ENCODE measurements at regions of chr17 and their contacts with region 1.

Region 1: DNA sequence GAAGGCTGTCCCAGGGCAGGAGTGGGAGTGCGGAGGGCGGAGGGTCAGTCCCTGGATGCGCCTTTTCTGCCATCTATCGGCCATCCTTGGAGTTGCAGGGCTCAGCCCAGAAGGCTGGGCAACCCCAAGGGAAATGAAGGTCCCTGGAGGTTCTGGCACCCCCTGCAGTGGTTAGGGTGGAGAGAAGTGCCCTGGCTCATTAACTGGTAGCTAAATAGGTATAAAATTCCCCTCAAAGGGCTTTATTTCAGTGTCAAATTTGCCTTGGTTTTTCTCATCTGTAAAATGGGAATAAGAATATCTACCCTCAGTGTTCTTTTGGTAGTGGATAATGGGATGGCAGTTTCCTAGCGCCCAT is 22.4 kb downstream of the C17orf75 start:
- DNase-seq: peak; percentile 41 to 45
- ATAC-seq: peak; percentile 71 to 85
- H3K4me3 ChIP-seq: no peak overlapping the region
- H3K27ac ChIP-seq: no peak overlapping the region
- H3K4me1 ChIP-seq: no peaks in the 10 kb centered on the region
- H3K27me3 ChIP-seq: no peaks in the 10 kb centered on the region
- CTCF ChIP-seq: peak; percentile 77 to 93 (median 80)
- POLR2A ChIP-seq: no peak

Region 2: DNA sequence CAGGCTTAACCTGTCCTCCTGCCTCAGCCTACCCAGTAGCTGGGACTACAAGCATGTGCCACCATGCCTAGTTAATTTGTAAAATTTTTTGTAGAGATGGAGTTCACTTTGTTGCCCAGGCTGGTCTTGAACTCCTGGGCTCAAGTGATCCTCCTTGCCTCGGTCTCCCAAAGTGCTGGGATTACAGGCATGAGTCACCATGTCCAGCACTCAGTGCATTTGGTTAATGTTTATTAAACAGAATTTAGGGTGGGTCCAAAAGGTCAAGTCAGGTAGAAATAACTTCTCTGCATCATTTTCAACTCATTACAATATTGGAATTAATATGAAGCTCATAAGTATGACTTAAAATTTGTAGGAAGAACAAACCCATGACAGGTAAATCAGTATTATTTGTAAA is 121.5 kb before region 1 on chr17:
- in situ Hi-C with region 1: no loop called
- intact Hi-C with region 1: no loop called
- DNase-seq: no peak
- ATAC-seq: no peak
- H3K4me3 ChIP-seq: no peak overlapping the region
- H3K27ac ChIP-seq: no peak overlapping the region
- H3K4me1 ChIP-seq: no peaks in the 10 kb centered on the region
- H3K27me3 ChIP-seq: no peaks in the 10 kb centered on the region
- CTCF ChIP-seq: no peak
- POLR2A ChIP-seq: no peak

Region 3: GRCh38 chr17:32253117-32253611 is 66.4 kb before region 1 on chr17:
- in situ Hi-C with region 1: loop called (anchors 5 to 10 kb)
- intact Hi-C with region 1: loop called (anchors 1 kb)
- DNase-seq: peak; percentile 50 to 61
- ATAC-seq: peak; percentile 83 to 97
- H3K4me3 ChIP-seq: no peak overlapping the region
- H3K27ac ChIP-seq: no peak overlapping the region
- H3K4me1 ChIP-seq: no peaks in the 10 kb centered on the region
- H3K27me3 ChIP-seq: no peaks in the 10 kb centered on the region
- CTCF ChIP-seq: peak; percentile 68 to 95 (median 82)
- POLR2A ChIP-seq: no peak

Region 4: GRCh38 chr17:32259586-32259985 is 59.9 kb before region 1 on chr17:
- in situ Hi-C with region 1: loop called (anchors 5 to 10 kb)
- intact Hi-C with region 1: no loop called
- DNase-seq: no peak
- ATAC-seq: no peak
- H3K4me3 ChIP-seq: no peak overlapping the region
- H3K27ac ChIP-seq: no peak overlapping the region
- H3K4me1 ChIP-seq: no peaks in the 10 kb centered on the region
- H3K27me3 ChIP-seq: peaks cover 0 to 10% (median 0%) of the 10 kb centered on the region in 3 donors
- CTCF ChIP-seq: no peak
- POLR2A ChIP-seq: no peak